Heart right ventricle (tissue), 16 donors: ENCODE measurements at regions of chr7 and their contacts with region 1.

Region 1: GRCh38 chr7:73482746-73483145 is 39.3 kb downstream of the BAZ1B start:
- DNase-seq: no peak
- ATAC-seq: no peak
- H3K4me3 ChIP-seq: no peak overlapping the region
- H3K27ac ChIP-seq: no peak overlapping the region
- H3K4me1 ChIP-seq: peaks cover 0 to 11% (median 4%) of the 10 kb centered on the region in 9 donors
- H3K27me3 ChIP-seq: no peaks in the 10 kb centered on the region
- CTCF ChIP-seq: no peak

Region 2: DNA sequence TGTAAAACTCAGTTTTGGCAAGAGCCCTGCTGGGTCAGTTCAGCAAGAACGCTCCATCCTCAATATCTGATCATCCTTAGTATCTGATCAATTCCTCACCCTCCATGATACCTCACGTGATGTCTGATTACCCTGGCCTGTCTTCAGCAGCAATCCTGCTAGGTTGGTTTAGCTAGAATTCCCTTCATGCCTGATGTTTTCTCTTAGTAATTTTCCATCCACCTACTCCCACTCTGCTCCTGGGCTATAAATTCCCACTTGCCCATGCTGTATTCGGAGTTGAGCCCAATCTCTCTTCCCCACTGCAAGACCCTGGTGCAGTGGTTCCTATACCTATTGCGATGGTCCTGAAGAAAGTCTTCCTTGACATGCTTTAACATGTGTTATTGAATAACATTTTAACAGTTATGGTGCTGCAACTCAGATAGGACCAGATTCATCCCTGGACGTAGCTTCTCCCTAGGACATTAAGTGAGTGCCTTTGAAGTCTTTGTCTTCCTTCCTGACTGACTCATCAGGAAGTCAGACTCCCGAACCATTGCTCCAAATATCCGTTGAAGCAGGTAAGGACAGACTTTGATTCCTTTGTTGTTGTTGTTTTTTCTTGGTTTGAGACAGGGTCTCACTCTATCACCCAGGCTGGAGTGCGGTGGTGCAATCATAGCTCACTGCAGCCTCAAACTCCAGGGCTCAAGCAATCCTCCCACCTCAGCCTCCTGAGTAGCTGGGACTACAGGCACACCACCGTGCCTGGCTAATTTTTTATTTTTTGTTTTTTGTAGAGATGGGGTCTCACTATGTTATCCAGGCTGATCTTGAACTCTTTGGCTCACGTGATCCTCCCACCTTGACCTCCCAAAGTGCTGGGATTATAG is 316.8 kb after region 1 on chr7:
- intact Hi-C with region 1: loop called in 1 of 10 experiments (anchors 5 kb)
- DNase-seq: no peak
- ATAC-seq: no peak
- H3K4me3 ChIP-seq: no peak overlapping the region
- H3K27ac ChIP-seq: no peak overlapping the region
- H3K4me1 ChIP-seq: no peaks in the 10 kb centered on the region
- H3K27me3 ChIP-seq: peaks cover 0 to 17% (median 0%) of the 10 kb centered on the region in 7 donors
- CTCF ChIP-seq: no peak